ENCODE measurements at regions of chr13 and their contacts with region 1.

Region 1: GRCh38 chr13:95676762-95677563 is at the start of gene DNAJC3:
- DNase-seq: peak; percentile 96 to 99 (median 98)
- ATAC-seq: peak; percentile 97
- H3K4me3 ChIP-seq: peak within 1 kb of the TSS; percentile 88
- H3K4me3 Mint-ChIP-seq: peak within 1 kb of the TSS; percentile 84 to 99 (median 95)
- H3K27ac ChIP-seq: peak within 1 kb of the TSS; percentile 83
- H3K27ac Mint-ChIP-seq: peak within 1 kb of the TSS; percentile 91 to 98 (median 94)
- H3K4me1 ChIP-seq: peaks cover 25% of the 10 kb centered on the region in 2 donors
- H3K4me1 Mint-ChIP-seq: peaks cover 42 to 77% (median 72%) of the 10 kb centered on the region in 7 donors
- H3K27me3 ChIP-seq: no peaks in the 10 kb centered on the region
- H3K27me3 Mint-ChIP-seq: no peaks in the 10 kb centered on the region
- total RNA-seq, gene DNAJC3: 13.9 to 33.0 (median 22.7) TPM

Region 2: DNA sequence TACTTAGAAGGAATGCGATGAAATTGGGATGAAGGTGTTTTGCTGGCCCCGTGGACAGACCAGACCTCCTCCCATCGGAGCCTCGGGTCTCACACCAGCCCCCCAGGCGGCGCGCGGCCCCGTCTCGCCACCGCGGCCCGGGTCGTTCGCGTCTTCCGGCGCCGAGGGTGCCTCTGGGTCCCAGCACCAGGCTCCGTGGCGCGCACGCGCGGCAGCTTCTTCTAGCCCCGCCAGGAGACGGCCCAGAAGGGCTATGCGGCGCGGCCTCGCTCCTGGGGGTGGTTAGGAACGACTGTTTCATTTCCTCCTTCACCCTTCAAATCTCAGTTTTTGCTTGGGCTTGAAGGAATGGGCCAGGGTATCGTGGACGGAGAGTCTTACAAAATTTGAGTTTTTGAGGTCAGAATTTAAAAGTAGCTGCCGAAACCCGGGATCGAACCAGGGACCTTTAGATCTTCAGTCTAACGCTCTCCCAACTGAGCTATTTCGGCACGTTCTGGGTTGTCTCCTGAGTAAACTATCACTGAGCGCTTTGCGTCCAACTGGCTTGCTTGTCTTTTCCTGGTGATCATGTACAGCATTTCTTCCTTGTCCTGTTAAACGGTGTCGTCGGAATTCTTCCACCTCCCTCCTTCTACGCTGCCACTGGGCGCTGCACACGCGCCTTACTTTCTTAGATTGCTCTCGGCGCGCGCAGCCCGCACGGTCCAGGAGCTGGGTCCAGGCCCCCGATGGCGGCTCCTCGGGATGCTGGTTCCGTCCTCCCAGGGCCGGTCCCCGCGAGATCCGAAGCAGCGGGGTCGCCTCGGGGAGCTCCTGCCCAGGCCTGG is 1127.5 kb before region 1 on chr13:
- CTCF ChIA-PET with region 1: no interaction called
- POLR2A ChIA-PET with region 1: no interaction called
- intact Hi-C with region 1: loop called (anchors 1 to 5 kb)
- DNase-seq: peak; percentile 81 to 95 (median 92)
- ATAC-seq: peak; percentile 94
- H3K4me3 ChIP-seq: peak overlapping the region; percentile 88
- H3K4me3 Mint-ChIP-seq: peak overlapping the region; percentile 88 to 100 (median 94)
- H3K27ac ChIP-seq: peak overlapping the region; percentile 95
- H3K27ac Mint-ChIP-seq: peak overlapping the region; percentile 96 to 100 (median 99)
- H3K4me1 ChIP-seq: peaks cover 8 to 14% of the 10 kb centered on the region in 2 donors
- H3K4me1 Mint-ChIP-seq: peaks cover 15 to 44% (median 30%) of the 10 kb centered on the region in 7 donors
- H3K27me3 ChIP-seq: no peaks in the 10 kb centered on the region
- H3K27me3 Mint-ChIP-seq: peaks cover 0 to 16% (median 5%) of the 10 kb centered on the region in 5 donors

Region 3: GRCh38 chr13:95191821-95192563 is 485.0 kb before region 1 on chr13:
- CTCF ChIA-PET with region 1: no interaction called
- POLR2A ChIA-PET with region 1: no interaction called
- intact Hi-C with region 1: loop called in 1 of 2 experiments (anchors 2 kb)
- DNase-seq: peak in 8 of 9 donors; percentile 12 to 67 (median 36)
- ATAC-seq: peak; percentile 73
- H3K4me3 ChIP-seq: no peak overlapping the region
- H3K4me3 Mint-ChIP-seq: no peak overlapping the region
- H3K27ac ChIP-seq: no peak overlapping the region
- H3K27ac Mint-ChIP-seq: peak overlapping the region in 3 of 9 donors; percentile 20 to 69 (median 32)
- H3K4me1 ChIP-seq: peaks cover 0 to 2% of the 10 kb centered on the region in 2 donors
- H3K4me1 Mint-ChIP-seq: peaks cover 2 to 21% (median 19%) of the 10 kb centered on the region in 7 donors
- H3K27me3 ChIP-seq: no peaks in the 10 kb centered on the region
- H3K27me3 Mint-ChIP-seq: no peaks in the 10 kb centered on the region

Region 4: GRCh38 chr13:95457294-95457693 is 219.7 kb before region 1 on chr13:
- CTCF ChIA-PET with region 1: no interaction called
- POLR2A ChIA-PET with region 1: no interaction called
- intact Hi-C with region 1: no loop called
- DNase-seq: no peak
- ATAC-seq: peak; percentile 42
- H3K4me3 ChIP-seq: no peak overlapping the region
- H3K4me3 Mint-ChIP-seq: peak overlapping the region in 4 of 10 donors; percentile 29 to 75 (median 36)
- H3K27ac ChIP-seq: no peak overlapping the region
- H3K27ac Mint-ChIP-seq: no peak overlapping the region
- H3K4me1 ChIP-seq: no peaks in the 10 kb centered on the region
- H3K4me1 Mint-ChIP-seq: peaks cover 4 to 14% (median 10%) of the 10 kb centered on the region in 7 donors
- H3K27me3 ChIP-seq: no peaks in the 10 kb centered on the region
- H3K27me3 Mint-ChIP-seq: peaks cover 3 to 16% (median 9%) of the 10 kb centered on the region in 5 donors

Region 5: DNA sequence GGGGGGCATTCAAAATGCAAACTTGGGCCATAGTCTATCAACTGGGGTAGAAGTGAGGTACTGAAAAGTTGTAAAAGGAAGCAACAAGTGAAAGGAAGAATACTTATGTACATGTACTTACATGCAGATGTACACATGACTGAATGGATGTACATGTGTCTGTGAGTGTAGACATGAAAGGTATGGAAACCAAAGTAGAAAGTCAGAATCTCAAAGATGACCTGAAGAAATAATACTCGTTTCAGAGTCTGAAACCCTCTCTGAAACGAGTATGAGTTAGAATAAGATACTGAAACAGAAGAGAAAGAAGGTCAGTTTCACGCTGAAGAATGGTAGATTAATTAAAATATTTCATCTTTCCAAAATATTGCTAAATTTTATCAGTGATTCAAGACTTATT is 46.4 kb before region 1 on chr13:
- CTCF ChIA-PET with region 1: no interaction called
- POLR2A ChIA-PET with region 1: no interaction called
- intact Hi-C with region 1: no loop called
- DNase-seq: no peak
- ATAC-seq: no peak
- H3K4me3 ChIP-seq: no peak overlapping the region
- H3K4me3 Mint-ChIP-seq: no peak overlapping the region
- H3K27ac ChIP-seq: no peak overlapping the region
- H3K27ac Mint-ChIP-seq: no peak overlapping the region
- H3K4me1 ChIP-seq: no peaks in the 10 kb centered on the region
- H3K4me1 Mint-ChIP-seq: peaks cover 0 to 2% (median 0%) of the 10 kb centered on the region in 7 donors
- H3K27me3 ChIP-seq: no peaks in the 10 kb centered on the region
- H3K27me3 Mint-ChIP-seq: peaks cover 10 to 32% (median 21%) of the 10 kb centered on the region in 5 donors

Region 6: DNA sequence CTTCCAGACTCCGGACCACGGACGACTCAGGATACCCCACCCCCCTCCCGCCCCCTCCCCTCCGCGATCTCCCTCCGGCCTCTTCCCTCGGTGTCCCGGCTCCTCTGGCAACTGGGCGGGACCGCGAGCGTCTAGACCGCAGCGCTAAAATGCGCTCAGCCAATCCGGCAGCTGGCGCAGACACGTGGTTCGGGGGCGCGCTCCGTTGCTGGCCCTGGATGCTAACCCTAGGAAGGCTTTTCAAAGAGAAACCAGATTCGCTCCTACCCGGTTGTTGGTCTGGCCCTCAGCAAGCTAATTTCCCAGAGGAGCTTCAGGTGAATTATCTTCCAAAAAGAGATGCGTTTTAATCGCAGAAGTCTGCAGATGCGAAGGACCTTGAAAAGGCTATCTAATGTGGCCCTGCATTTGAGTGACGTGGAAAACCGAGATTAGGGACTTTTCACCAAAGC is 32.3 kb before region 1 on chr13 and contains the start of gene DZIP1:
- CTCF ChIA-PET with region 1: no interaction called
- POLR2A ChIA-PET with region 1: no interaction called
- intact Hi-C with region 1: loop called in 1 of 2 experiments (anchors 5 kb)
- DNase-seq: peak in 1 of 9 donors; percentile 30
- ATAC-seq: no peak
- H3K4me3 ChIP-seq: no peak within 1 kb of the TSS
- H3K4me3 Mint-ChIP-seq: peak within 1 kb of the TSS; percentile 45 to 78 (median 66)
- H3K27ac ChIP-seq: no peak within 1 kb of the TSS
- H3K27ac Mint-ChIP-seq: no peak within 1 kb of the TSS
- H3K4me1 ChIP-seq: no peaks in the 10 kb centered on the region
- H3K4me1 Mint-ChIP-seq: peaks cover 0 to 19% (median 10%) of the 10 kb centered on the region in 7 donors
- H3K27me3 ChIP-seq: peaks cover 3% of the 10 kb centered on the region in 2 donors
- H3K27me3 Mint-ChIP-seq: peaks cover 33 to 62% (median 41%) of the 10 kb centered on the region in 5 donors
- total RNA-seq, gene DZIP1: not detected

Region 7: GRCh38 chr13:95771905-95772304 is 94.9 kb after region 1 on chr13:
- CTCF ChIA-PET with region 1: no interaction called
- POLR2A ChIA-PET with region 1: no interaction called
- intact Hi-C with region 1: loop called in 1 of 2 experiments (anchors 5 kb)
- DNase-seq: no peak
- ATAC-seq: no peak
- H3K4me3 ChIP-seq: no peak overlapping the region
- H3K4me3 Mint-ChIP-seq: no peak overlapping the region
- H3K27ac ChIP-seq: no peak overlapping the region
- H3K27ac Mint-ChIP-seq: no peak overlapping the region
- H3K4me1 ChIP-seq: no peaks in the 10 kb centered on the region
- H3K4me1 Mint-ChIP-seq: peaks cover 0 to 14% (median 6%) of the 10 kb centered on the region in 7 donors
- H3K27me3 ChIP-seq: no peaks in the 10 kb centered on the region
- H3K27me3 Mint-ChIP-seq: no peaks in the 10 kb centered on the region

Region 8: GRCh38 chr13:96112927-96113326 is 436.0 kb after region 1 on chr13:
- CTCF ChIA-PET with region 1: no interaction called
- POLR2A ChIA-PET with region 1: no interaction called
- intact Hi-C with region 1: no loop called
- DNase-seq: no peak
- ATAC-seq: no peak
- H3K4me3 ChIP-seq: no peak overlapping the region
- H3K4me3 Mint-ChIP-seq: no peak overlapping the region
- H3K27ac ChIP-seq: no peak overlapping the region
- H3K27ac Mint-ChIP-seq: no peak overlapping the region
- H3K4me1 ChIP-seq: no peaks in the 10 kb centered on the region
- H3K4me1 Mint-ChIP-seq: no peaks in the 10 kb centered on the region
- H3K27me3 ChIP-seq: no peaks in the 10 kb centered on the region
- H3K27me3 Mint-ChIP-seq: no peaks in the 10 kb centered on the region

Region 9: DNA sequence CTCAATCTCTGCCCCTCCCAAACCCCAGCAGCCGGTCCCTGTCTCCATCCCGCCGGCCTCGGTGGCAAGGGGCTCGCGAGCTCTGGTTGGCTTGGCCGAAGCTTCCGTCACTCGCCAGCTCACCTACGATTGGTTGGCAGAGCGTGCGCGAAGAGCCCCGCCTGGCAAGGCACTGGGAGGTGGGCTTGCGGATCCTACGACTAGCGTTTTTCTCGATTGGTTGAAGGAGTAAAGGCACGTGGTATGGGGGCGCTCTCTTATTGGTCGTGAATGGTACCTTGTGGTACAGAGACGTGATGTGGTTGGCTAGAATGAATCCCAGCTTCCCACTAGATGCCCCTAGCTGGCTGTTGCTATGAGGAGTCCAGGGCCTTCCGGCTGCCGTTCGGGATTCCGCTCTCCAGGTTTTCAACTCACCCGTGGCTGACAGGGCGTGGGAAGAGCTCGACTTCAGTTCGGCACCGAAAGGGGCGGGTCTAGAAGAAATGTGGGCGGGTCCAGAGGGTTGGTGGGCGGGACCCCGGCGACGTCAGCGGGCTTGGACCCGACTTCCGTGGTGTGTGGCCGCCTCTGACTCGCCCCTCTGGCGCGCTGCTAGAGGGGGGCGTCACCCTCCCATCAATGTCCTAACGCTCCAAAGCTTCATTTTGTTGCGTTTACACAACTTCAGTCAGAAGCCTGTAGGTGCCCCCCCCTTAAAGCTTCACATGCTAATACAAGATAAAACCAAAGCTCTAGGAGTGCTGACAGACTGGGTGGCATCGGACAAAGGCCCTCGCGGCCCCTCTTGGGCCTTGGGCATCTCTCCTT is 1756.2 kb after region 1 on chr13:
- CTCF ChIA-PET with region 1: no interaction called
- POLR2A ChIA-PET with region 1: interaction called, 10 read pairs
- intact Hi-C with region 1: loop called in 1 of 2 experiments (anchors 1 kb)
- DNase-seq: peak; percentile 97 to 99 (median 99)
- ATAC-seq: peak; percentile 85
- H3K4me3 ChIP-seq: peak overlapping the region; percentile 93
- H3K4me3 Mint-ChIP-seq: peak overlapping the region; percentile 90 to 99 (median 96)
- H3K27ac ChIP-seq: peak overlapping the region; percentile 100
- H3K27ac Mint-ChIP-seq: peak overlapping the region; percentile 98 to 100 (median 100)
- H3K4me1 ChIP-seq: peaks cover 0 to 8% of the 10 kb centered on the region in 2 donors
- H3K4me1 Mint-ChIP-seq: peaks cover 13 to 36% (median 30%) of the 10 kb centered on the region in 7 donors
- H3K27me3 ChIP-seq: no peaks in the 10 kb centered on the region
- H3K27me3 Mint-ChIP-seq: peaks cover 0 to 11% (median 7%) of the 10 kb centered on the region in 5 donors